ENCODE measurements at regions of chr2 and their contacts with region 1.

Region 1: DNA sequence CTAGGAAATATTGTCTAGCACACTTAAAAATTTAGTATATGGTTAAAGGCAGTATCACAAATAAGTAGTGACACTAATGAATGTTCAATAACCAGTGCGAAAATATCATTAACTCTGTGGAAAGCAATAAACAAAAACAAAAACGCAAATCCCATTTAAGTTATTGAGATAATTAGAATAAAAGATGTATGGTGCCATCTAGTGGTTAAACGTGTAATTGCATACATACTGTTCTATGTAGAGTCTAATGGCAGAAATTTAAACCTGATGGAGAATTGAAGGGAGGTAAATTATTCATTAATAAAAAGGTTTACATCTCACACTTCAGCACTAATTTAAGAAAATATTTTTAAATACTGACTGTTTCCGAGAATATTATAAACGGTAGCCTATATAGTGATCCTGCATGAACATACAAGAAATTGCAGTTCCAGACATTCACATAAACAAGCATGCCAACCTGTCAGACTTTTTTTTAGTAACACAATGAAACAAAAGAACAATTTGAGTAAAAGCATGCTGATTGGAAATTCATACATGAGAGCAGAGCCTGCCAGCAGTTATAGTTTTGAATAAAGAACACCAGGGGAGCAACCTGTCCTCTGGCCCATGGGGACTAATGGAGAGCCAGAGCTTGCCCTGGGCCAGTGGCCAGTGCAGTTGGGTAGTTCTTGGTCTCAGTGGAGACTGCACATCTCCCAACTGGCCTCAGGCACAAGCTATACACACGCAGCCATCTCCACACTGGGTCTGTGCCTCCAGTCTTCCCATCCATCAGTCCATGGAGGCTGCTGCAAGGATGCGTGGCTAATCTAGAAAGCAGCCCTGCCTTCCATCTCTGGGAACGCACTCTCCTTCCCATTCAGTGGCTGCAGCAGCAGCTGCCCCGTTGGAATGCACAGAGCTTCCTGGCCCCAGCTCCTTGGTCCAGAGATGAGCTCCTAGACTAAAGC is 28.0 kb downstream of the GCG start:
- DNase-seq: peak in 1 of 2 experiments; percentile 39
- H3K4me3 ChIP-seq: no peak overlapping the region
- H3K27ac ChIP-seq: no peak overlapping the region
- H3K4me1 ChIP-seq: no peaks in the 10 kb centered on the region
- H3K27me3 ChIP-seq: no peaks in the 10 kb centered on the region
- CTCF ChIP-seq: peak; percentile 75

Region 2: DNA sequence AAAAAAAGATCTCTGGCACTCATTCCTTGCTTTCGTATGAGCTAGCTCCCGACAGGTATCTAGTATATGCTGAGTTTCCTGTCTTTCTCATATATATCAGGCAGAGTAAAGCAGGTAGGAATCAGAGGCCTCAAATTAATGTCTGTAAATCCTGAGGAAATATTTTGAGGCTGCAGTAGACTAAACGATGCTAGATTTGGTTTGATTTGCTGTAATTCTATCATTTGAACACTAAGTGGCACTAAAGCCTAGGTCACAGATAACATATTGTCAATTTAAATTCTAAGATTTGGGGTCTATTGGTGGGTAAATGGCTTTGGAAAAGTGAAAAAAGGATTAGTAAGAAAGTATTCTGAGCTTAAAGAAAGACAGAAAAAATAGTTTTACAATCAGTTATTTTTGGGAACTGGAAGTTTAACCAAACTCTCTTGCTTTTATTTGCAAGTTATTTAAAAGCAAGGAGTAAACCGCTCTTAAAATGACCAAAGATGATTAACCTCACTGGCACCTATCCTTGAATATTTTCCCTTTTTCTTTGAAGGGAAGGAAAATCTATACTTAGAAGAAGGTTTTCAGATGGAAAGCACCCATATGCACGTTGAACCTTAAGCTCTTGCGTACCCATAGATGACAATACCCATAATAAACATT is 537.4 kb before region 1 on chr2:
- CTCF ChIA-PET with region 1: no interaction called
- POLR2A ChIA-PET with region 1: no interaction called
- intact Hi-C with region 1: loop called (anchors 1 kb)
- DNase-seq: no peak
- H3K4me3 ChIP-seq: no peak overlapping the region
- H3K27ac ChIP-seq: no peak overlapping the region
- H3K4me1 ChIP-seq: no peaks in the 10 kb centered on the region
- H3K27me3 ChIP-seq: no peaks in the 10 kb centered on the region
- CTCF ChIP-seq: peak; percentile 78

Region 3: GRCh38 chr2:161946489-161947107 is 177.5 kb before region 1 on chr2:
- CTCF ChIA-PET with region 1: interaction called, 3 read pairs
- POLR2A ChIA-PET with region 1: no interaction called
- intact Hi-C with region 1: loop called (anchors 5 kb)
- DNase-seq: no peak
- H3K4me3 ChIP-seq: no peak overlapping the region
- H3K27ac ChIP-seq: no peak overlapping the region
- H3K4me1 ChIP-seq: no peaks in the 10 kb centered on the region
- H3K27me3 ChIP-seq: no peaks in the 10 kb centered on the region
- CTCF ChIP-seq: peak; percentile 70

Region 4: GRCh38 chr2:162007447-162008040 is 116.5 kb before region 1 on chr2:
- CTCF ChIA-PET with region 1: interaction called, 7 read pairs
- POLR2A ChIA-PET with region 1: no interaction called
- intact Hi-C with region 1: loop called (anchors 2 kb)
- DNase-seq: no peak
- H3K4me3 ChIP-seq: no peak overlapping the region
- H3K27ac ChIP-seq: no peak overlapping the region
- H3K4me1 ChIP-seq: no peaks in the 10 kb centered on the region
- H3K27me3 ChIP-seq: no peaks in the 10 kb centered on the region
- CTCF ChIP-seq: peak; percentile 68

Region 5: GRCh38 chr2:162153608-162154224 is 29.6 kb after region 1 on chr2:
- CTCF ChIA-PET with region 1: no interaction called
- POLR2A ChIA-PET with region 1: no interaction called
- intact Hi-C with region 1: no loop called
- DNase-seq: peak in 1 of 2 experiments; percentile 40
- H3K4me3 ChIP-seq: no peak overlapping the region
- H3K27ac ChIP-seq: no peak overlapping the region
- H3K4me1 ChIP-seq: no peaks in the 10 kb centered on the region
- H3K27me3 ChIP-seq: no peaks in the 10 kb centered on the region
- CTCF ChIP-seq: peak; percentile 73

Region 6: GRCh38 chr2:162929571-162929970 is 805.5 kb after region 1 on chr2:
- CTCF ChIA-PET with region 1: no interaction called
- POLR2A ChIA-PET with region 1: no interaction called
- intact Hi-C with region 1: no loop called
- DNase-seq: no peak
- H3K4me3 ChIP-seq: no peak overlapping the region
- H3K27ac ChIP-seq: no peak overlapping the region
- H3K4me1 ChIP-seq: peaks cover 8% of the 10 kb centered on the region
- H3K27me3 ChIP-seq: no peaks in the 10 kb centered on the region
- CTCF ChIP-seq: no peak

Measured in PC-9 (cell line).